Activated CD4-positive, alpha-beta memory T cell treated with anti-CD3 and anti-CD28 coated beads for 36 hours (primary cell): ENCODE measurements at regions of chr11 and their contacts with region 1.

Region 1: GRCh38 chr11:119121008-119121810 is at the start of gene HINFP:
- DNase-seq: peak; percentile 100
- H3K4me3 Mint-ChIP-seq: peak within 1 kb of the TSS; percentile 88
- H3K27ac Mint-ChIP-seq: peak within 1 kb of the TSS; percentile 78
- H3K4me1 Mint-ChIP-seq: peaks cover 28% of the 10 kb centered on the region
- H3K27me3 Mint-ChIP-seq: no peaks in the 10 kb centered on the region
- total RNA-seq, gene HINFP: 22.3 to 24.3 TPM

Region 2: GRCh38 chr11:119084663-119085436 is 36.4 kb before region 1 on chr11 and contains the start of gene HMBS:
- CTCF ChIA-PET with region 1: no interaction called
- POLR2A ChIA-PET with region 1: no interaction called
- intact Hi-C with region 1: loop called (anchors 2 kb)
- DNase-seq: peak; percentile 93
- H3K4me3 Mint-ChIP-seq: peak within 1 kb of the TSS; percentile 98
- H3K27ac Mint-ChIP-seq: peak within 1 kb of the TSS; percentile 95
- H3K4me1 Mint-ChIP-seq: peaks cover 21% of the 10 kb centered on the region
- H3K27me3 Mint-ChIP-seq: no peaks in the 10 kb centered on the region
- total RNA-seq, gene HMBS: 31.2 to 33.8 TPM